ENCODE measurements at regions of chr11 and their contacts with region 1.

Region 1: DNA sequence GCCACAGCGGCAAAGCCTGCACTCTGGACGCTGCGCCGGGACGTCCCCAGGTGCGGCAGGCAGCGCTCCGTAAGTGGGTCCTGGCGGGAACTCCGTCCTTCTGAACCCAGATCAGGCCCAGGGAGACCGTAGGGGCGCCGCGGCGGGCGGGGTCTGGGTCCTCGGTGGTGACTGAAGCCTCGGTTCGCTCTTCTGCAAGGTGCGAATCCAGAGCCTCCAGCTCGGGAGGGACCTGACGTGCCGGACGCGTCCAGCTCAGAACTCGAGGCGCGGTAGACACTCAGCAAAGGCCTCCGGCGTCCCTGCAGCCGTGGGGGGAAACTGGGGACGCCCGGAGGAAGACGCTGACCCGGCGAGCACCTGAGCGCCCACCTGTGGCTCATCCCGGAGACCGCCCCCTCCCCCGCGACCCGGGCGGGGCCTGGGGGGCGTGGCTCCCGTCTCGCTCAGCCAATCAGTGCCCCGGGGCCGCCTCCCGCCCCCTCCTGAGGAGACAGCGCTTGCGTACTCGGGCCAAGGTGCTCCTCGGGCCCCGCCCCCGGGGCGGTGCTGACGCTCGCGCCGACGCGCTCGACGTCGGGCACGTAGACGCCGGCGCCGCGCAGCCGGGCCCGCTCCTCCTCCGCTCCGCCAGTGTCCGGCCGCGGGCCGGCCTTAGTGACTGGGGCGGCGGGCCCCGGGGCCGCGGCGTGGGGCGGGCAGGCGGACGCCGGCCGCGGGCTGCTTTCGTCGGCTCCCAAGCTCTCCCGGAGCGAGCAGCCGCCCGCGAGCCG is at the start of gene PPFIA1:
- DNase-seq: peak; percentile 94
- H3K4me3 ChIP-seq: peak within 1 kb of the TSS; percentile 60 to 87 (median 86)
- H3K27ac ChIP-seq: peak within 1 kb of the TSS; percentile 89
- H3K4me1 ChIP-seq: peaks cover 15% of the 10 kb centered on the region
- H3K27me3 ChIP-seq: peaks cover 4 to 14% of the 10 kb centered on the region in 2 experiments
- CTCF ChIP-seq: no peak
- POLR2A ChIP-seq: peak; percentile 92
- total RNA-seq, gene PPFIA1: 60.7 and 60.9 TPM in 2 replicates

Region 2: DNA sequence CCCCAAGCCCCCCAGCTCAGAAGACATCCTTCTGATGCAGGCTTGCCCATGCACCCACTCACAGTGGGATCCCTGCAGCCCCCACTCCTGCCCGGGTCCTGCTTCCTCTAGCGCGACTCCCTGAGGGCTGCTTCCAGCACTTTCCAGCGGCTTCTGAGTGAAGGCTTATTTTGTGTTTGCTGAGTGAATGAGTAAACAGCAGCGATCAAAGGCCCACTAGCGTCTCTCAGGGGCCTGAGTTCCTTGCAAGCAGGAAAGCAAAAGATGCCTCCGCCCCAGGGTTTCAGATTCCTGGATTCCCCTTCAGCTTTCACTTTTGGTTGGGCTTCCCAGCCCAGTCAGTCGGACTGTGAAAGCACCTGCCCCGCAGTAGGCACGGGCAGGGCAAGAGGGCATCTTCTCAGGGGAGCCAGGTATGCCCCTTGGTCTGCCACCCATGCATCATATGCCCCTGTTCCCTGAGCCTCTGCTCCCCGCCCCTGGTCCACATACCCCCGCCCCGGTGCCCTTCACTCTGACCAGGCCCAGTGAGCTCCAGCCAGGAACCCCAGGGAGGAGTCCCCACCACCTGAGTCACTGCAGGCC is 58.0 kb before region 1 on chr11:
- CTCF ChIA-PET with region 1: no interaction called
- POLR2A ChIA-PET with region 1: no interaction called
- dilution Hi-C with region 1: no loop called
- intact Hi-C with region 1: no loop called
- DNase-seq: no peak
- H3K4me3 ChIP-seq: no peak overlapping the region
- H3K27ac ChIP-seq: no peak overlapping the region
- H3K4me1 ChIP-seq: no peaks in the 10 kb centered on the region
- H3K27me3 ChIP-seq: no peaks in the 10 kb centered on the region
- CTCF ChIP-seq: no peak
- POLR2A ChIP-seq: no peak

Region 3: DNA sequence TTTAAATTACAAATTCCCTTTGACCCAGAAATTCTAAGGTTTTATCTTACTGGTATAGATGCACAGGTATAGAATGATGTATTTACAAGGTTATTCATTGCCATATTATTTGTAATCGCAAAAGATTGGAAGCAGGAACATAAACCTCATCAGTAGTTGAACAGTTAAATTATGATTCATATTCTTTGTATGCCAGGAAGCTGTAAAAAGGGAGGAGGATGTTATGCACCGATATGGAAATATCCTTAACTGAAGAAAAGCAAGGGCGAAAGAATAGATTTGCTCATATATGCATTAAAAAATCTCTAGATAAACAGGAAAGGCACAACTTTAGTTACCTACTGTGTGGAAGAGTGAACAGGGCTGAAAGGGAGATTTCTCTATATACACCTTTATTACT is 36.9 kb after region 1 on chr11:
- CTCF ChIA-PET with region 1: interaction called, 3 read pairs
- POLR2A ChIA-PET with region 1: no interaction called
- dilution Hi-C with region 1: no loop called
- intact Hi-C with region 1: loop called (anchors 2 kb)
- DNase-seq: peak; percentile 84
- H3K4me3 ChIP-seq: peak overlapping the region in 1 of 3 experiments; percentile 19
- H3K27ac ChIP-seq: peak overlapping the region; percentile 75
- H3K4me1 ChIP-seq: peaks cover 21% of the 10 kb centered on the region
- H3K27me3 ChIP-seq: no peaks in the 10 kb centered on the region
- CTCF ChIP-seq: no peak
- POLR2A ChIP-seq: no peak

Region 4: GRCh38 chr11:70397983-70398833 is 127.9 kb after region 1 on chr11 and contains the start of gene CTTN:
- CTCF ChIA-PET with region 1: no interaction called
- POLR2A ChIA-PET with region 1: no interaction called
- dilution Hi-C with region 1: no loop called
- intact Hi-C with region 1: loop called (anchors 2 kb)
- DNase-seq: peak; percentile 87
- H3K4me3 ChIP-seq: peak within 1 kb of the TSS; percentile 84 to 89 (median 85)
- H3K27ac ChIP-seq: peak within 1 kb of the TSS; percentile 60
- H3K4me1 ChIP-seq: peaks cover 19% of the 10 kb centered on the region
- H3K27me3 ChIP-seq: no peaks in the 10 kb centered on the region
- CTCF ChIP-seq: no peak
- POLR2A ChIP-seq: peak; percentile 69
- total RNA-seq, gene CTTN: 307 and 330 TPM in 2 replicates

Region 5: GRCh38 chr11:70755410-70756161 is 485.3 kb after region 1 on chr11:
- CTCF ChIA-PET with region 1: no interaction called
- POLR2A ChIA-PET with region 1: no interaction called
- dilution Hi-C with region 1: no loop called
- intact Hi-C with region 1: no loop called
- DNase-seq: peak; percentile 37
- H3K4me3 ChIP-seq: no peak overlapping the region
- H3K27ac ChIP-seq: no peak overlapping the region
- H3K4me1 ChIP-seq: no peaks in the 10 kb centered on the region
- H3K27me3 ChIP-seq: no peaks in the 10 kb centered on the region
- CTCF ChIP-seq: peak; percentile 87 to 97
- POLR2A ChIP-seq: no peak

Measured in endothelial cell of umbilical vein (primary cell).